PC-3 (cell line): ENCODE measurements at regions of chr11 and their contacts with region 1.

Region 1: DNA sequence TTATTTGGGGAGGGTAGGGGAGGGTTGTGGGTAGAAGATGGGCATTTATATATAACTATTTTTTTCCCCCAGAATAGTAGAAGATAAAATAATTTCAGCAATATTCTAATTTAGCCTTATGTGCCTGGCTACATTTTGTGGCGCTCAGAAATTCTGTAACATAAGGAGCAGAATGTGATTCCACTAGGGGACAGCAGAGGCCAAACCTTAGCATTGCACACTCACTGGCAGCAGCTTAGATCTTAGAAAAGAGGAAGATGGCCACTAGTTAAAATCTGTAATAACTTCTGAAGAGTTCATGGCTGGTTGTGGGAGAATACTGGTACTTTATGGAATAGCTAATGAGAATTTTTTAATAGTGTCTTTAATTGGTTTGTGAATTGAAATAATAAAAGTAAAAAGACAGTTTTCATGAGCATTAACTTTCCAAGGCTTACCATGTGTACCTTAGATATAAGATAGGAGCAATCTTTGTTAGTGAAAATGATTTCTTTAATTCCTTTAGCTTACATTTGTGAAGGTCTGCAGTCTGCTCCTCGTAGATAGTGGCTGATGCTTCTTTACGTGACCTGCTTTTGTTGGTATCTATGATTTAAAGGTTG is 33.1 kb downstream of the DDX10 start:
- DNase-seq: peak; percentile 79
- ATAC-seq: peak; percentile 82
- H3K4me3 ChIP-seq: no peak overlapping the region
- H3K27ac ChIP-seq: no peak overlapping the region
- H3K4me1 ChIP-seq: peaks cover 13% of the 10 kb centered on the region
- H3K27me3 ChIP-seq: no peaks in the 10 kb centered on the region
- CTCF ChIP-seq: peak; percentile 96

Region 2: GRCh38 chr11:108713076-108713790 is 15.3 kb after region 1 on chr11:
- CTCF ChIA-PET with region 1: no interaction called
- POLR2A ChIA-PET with region 1: no interaction called
- intact Hi-C with region 1: no loop called
- DNase-seq: peak; percentile 20
- ATAC-seq: peak; percentile 73
- H3K4me3 ChIP-seq: no peak overlapping the region
- H3K27ac ChIP-seq: no peak overlapping the region
- H3K4me1 ChIP-seq: no peaks in the 10 kb centered on the region
- H3K27me3 ChIP-seq: no peaks in the 10 kb centered on the region
- CTCF ChIP-seq: no peak

Region 3: DNA sequence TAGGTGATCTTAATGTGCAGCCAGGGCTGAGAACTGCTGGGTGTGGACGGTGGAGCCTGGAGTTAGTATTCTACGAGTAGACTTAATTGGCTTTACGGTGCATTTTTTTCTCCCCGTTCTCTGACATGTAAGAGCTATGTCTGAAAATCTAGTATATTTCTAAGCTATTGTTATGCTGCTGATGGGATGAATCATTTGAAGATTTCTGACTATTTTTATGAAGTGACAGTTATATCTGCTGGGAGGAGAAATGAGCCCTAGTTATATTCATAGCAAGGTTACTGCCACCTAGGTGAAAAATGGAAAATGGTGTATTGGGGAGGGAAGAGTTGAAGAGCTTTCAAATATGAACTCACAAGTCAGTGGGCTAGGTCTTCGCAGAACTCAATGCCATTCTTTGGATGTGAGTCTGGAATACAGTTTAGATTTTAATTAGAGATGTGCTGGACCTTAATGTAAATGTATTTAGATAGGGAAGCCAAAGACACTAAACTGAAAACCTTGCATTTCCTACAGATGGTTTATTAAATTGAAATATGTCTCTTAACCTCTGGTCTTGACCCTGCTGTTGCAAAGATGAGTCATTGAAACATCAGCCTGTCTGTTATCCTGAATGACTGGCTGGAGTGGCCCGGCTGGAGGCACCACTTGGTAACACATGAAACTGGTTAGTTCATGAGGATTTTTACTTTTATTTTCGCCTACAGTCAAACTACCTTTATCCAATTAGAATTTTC is 260.6 kb after region 1 on chr11:
- CTCF ChIA-PET with region 1: no interaction called
- POLR2A ChIA-PET with region 1: no interaction called
- intact Hi-C with region 1: loop called (anchors 5 kb)
- DNase-seq: peak; percentile 78
- ATAC-seq: peak; percentile 93
- H3K4me3 ChIP-seq: no peak overlapping the region
- H3K27ac ChIP-seq: peak overlapping the region; percentile 14; the same call in 1 of the 2 replicates
- H3K4me1 ChIP-seq: peaks cover 27% of the 10 kb centered on the region
- H3K27me3 ChIP-seq: no peaks in the 10 kb centered on the region
- CTCF ChIP-seq: no peak; the same call in 1 of the 2 replicates

Region 4: DNA sequence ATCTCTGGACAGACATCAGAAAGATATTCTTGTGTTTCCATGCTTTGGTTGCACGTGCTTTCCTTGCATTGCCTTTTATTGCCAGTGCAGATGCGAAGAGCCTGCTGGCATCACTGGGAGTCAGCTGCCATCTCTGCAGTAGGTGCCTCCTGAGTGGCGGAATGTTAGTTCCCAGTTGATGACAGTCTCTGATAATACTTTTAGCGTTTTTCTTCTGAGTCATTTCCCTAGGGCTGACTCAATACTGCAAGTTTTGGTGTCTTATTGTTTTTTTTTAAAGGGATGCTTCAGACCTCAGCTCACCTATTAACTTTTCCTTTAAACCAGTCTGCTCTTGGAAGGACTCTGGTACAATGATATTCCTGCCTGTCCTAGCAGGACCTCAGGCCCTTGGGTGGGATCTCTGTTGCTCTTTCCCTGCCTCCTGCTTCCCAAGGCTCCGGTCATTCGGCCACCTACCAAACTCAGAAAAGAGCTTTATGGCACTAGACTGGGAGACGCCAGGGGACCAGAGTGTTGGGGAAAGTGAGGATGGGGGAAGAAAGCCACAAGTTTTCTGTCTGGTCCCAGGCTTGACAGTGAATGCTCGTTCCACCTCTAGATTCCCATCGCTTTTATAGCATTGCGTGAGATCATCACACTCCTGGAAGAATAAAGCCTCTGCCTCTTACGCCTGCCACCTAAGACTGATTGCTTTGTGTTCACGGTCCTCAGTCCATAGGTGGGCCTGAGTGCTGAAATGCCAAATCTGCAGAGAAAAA is 275.6 kb after region 1 on chr11:
- CTCF ChIA-PET with region 1: no interaction called
- POLR2A ChIA-PET with region 1: no interaction called
- intact Hi-C with region 1: loop called (anchors 5 kb)
- DNase-seq: peak; percentile 96
- ATAC-seq: peak; percentile 91
- H3K4me3 ChIP-seq: no peak overlapping the region
- H3K27ac ChIP-seq: peak overlapping the region; percentile 61
- H3K4me1 ChIP-seq: peaks cover 22% of the 10 kb centered on the region
- H3K27me3 ChIP-seq: no peaks in the 10 kb centered on the region
- CTCF ChIP-seq: no peak